ENCODE measurements at regions of chr3 and their contacts with region 1.

Region 1: DNA sequence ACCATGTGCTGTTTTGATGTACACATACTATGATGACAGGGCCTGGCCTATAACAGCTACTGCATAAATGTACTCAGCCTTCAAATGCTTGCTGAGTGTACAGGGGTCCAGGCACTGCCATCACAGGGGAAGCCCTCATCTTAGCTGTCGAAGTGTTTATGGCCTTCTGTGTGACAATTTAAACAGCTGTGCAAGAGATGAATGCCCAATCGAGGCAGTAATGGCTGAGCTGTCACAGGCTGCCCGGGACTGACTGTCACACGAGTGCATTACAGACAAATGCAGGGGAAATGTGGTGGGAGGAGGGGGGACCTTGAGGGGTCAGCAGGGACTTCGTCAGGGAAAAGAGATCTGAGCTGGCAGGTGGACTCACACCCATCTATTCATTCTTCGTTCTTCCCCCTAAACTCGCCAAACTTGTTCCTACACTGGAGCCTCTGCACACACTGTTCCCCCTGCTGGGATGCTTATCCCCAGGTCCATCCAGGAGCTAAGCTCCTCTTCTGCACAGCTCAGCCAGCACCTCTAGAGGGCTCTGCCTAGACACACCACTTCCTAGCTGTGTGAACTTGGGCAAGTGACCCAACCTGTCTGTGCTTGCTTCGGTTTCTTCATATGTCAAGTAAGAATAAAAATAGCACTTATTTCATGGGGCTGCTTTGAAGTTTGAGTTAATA is 156.2 kb upstream of the IQSEC1 start:
- DNase-seq: peak; percentile 65
- ATAC-seq: peak; percentile 100
- H3K4me3 ChIP-seq: no peak overlapping the region
- H3K27ac ChIP-seq: no peak overlapping the region
- H3K4me1 ChIP-seq: peaks cover 5 to 12% of the 10 kb centered on the region in 2 experiments; a peak in 3 of 4 replicates
- H3K27me3 ChIP-seq: no peaks in the 10 kb centered on the region
- CTCF ChIP-seq: peak; percentile 75 to 78 (median 76)
- POLR2A ChIP-seq: no peak
- RAD21 ChIP-seq: peak; percentile 74

Region 2: GRCh38 chr3:13241621-13242363 is 12.4 kb after region 1 on chr3:
- CTCF ChIA-PET with region 1: interaction called, 11 read pairs
- POLR2A ChIA-PET with region 1: no interaction called
- RAD21 ChIA-PET with region 1: no interaction called
- intact Hi-C with region 1: no loop called
- DNase-seq: no peak
- ATAC-seq: no peak
- H3K4me3 ChIP-seq: no peak overlapping the region
- H3K27ac ChIP-seq: no peak overlapping the region
- H3K4me1 ChIP-seq: peaks cover 2 to 13% of the 10 kb centered on the region in 2 experiments; a peak in 2 of 4 replicates
- H3K27me3 ChIP-seq: no peaks in the 10 kb centered on the region
- CTCF ChIP-seq: 0 out of 6 replicates have a peak, but pooled peaks of 1 of the 3 experiments have one; percentile 4
- POLR2A ChIP-seq: no peak
- RAD21 ChIP-seq: no peak

Region 3: GRCh38 chr3:13248640-13249039 is 19.2 kb after region 1 on chr3:
- CTCF ChIA-PET with region 1: interaction called, 10 read pairs
- POLR2A ChIA-PET with region 1: no interaction called
- RAD21 ChIA-PET with region 1: no interaction called
- intact Hi-C with region 1: no loop called
- DNase-seq: no peak
- ATAC-seq: no peak
- H3K4me3 ChIP-seq: no peak overlapping the region
- H3K27ac ChIP-seq: no peak overlapping the region
- H3K4me1 ChIP-seq: peaks cover 2 to 13% of the 10 kb centered on the region in 2 experiments; a peak in 2 of 4 replicates
- H3K27me3 ChIP-seq: no peaks in the 10 kb centered on the region
- CTCF ChIP-seq: no peak
- POLR2A ChIP-seq: no peak
- RAD21 ChIP-seq: no peak